ENCODE measurements at regions of chr1 and their contacts with region 1.

Region 1: GRCh38 chr1:53220171-53220961 is at the start of gene CZIB:
- DNase-seq: peak; percentile 80 to 98 (median 92)
- ATAC-seq: peak; percentile 91 to 93
- H3K4me3 Mint-ChIP-seq: peak within 1 kb of the TSS; percentile 89 to 97 (median 92)
- H3K27ac Mint-ChIP-seq: peak within 1 kb of the TSS; percentile 94 to 99 (median 98)
- H3K4me1 Mint-ChIP-seq: peaks cover 10 to 30% (median 26%) of the 10 kb centered on the region in 4 donors
- H3K27me3 Mint-ChIP-seq: no peaks in the 10 kb centered on the region
- polyA plus RNA-seq, gene CZIB: 61.2 to 66.5 (median 62.6) TPM

Region 2: DNA sequence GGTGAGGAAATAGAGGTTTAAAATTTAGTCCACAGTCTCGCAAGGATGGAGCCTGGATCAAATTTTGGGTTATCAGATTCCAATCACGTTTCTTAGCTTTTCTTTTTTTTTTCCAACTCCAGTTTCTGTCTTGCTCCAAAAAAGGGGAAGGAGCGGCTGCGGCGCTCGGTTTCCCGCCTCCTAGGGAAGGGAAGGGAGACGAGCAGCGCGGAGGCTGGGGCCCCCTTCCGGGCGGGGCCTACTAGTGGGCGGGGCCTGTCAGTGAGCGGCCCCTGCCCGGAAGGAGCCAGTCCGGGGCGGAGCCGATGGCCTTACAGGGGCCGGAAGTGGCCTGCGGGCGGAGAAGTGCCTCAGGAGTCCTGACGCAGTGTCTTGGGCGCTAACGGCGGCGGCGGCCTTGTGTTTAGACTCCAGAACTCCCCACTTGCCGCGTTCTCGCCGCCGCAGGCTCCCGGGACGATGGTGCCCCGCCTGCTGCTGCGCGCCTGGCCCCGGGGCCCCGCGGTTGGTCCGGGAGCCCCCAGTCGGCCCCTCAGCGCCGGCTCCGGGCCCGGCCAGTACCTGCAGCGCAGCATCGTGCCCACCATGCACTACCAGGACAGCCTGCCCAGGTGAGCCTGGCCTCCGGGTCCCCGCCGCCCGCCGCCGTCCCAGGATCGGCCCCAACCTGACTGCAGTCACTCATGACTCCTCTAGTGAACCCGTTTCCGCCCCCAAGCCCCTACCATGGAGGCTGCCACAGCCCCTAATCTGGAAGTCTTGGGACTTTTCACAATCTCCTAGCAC is 23.7 kb before region 1 on chr1 and contains the start of gene CPT2:
- POLR2A ChIA-PET with region 1: interaction called, 12 read pairs
- DNase-seq: peak; percentile 80 to 95 (median 88)
- ATAC-seq: peak; percentile 95
- H3K4me3 Mint-ChIP-seq: peak within 1 kb of the TSS; percentile 88 to 97 (median 96)
- H3K27ac Mint-ChIP-seq: peak within 1 kb of the TSS; percentile 94 to 100 (median 99)
- H3K4me1 Mint-ChIP-seq: peaks cover 17 to 40% (median 38%) of the 10 kb centered on the region in 4 donors
- H3K27me3 Mint-ChIP-seq: no peaks in the 10 kb centered on the region
- polyA plus RNA-seq, gene CPT2: 15.2 to 23.8 (median 19.1) TPM

Region 3: GRCh38 chr1:53238197-53239155 is 18.1 kb after region 1 on chr1 and contains the start of gene MAGOH:
- POLR2A ChIA-PET with region 1: interaction called, 28 read pairs
- DNase-seq: peak; percentile 87 to 97 (median 94)
- ATAC-seq: peak; percentile 97 to 98
- H3K4me3 Mint-ChIP-seq: peak within 1 kb of the TSS; percentile 94 to 100 (median 97)
- H3K27ac Mint-ChIP-seq: peak within 1 kb of the TSS; percentile 92 to 99 (median 98)
- H3K4me1 Mint-ChIP-seq: peaks cover 22 to 37% (median 34%) of the 10 kb centered on the region in 4 donors
- H3K27me3 Mint-ChIP-seq: no peaks in the 10 kb centered on the region
- polyA plus RNA-seq, gene MAGOH: 99.7 to 116 (median 114) TPM

Region 4: DNA sequence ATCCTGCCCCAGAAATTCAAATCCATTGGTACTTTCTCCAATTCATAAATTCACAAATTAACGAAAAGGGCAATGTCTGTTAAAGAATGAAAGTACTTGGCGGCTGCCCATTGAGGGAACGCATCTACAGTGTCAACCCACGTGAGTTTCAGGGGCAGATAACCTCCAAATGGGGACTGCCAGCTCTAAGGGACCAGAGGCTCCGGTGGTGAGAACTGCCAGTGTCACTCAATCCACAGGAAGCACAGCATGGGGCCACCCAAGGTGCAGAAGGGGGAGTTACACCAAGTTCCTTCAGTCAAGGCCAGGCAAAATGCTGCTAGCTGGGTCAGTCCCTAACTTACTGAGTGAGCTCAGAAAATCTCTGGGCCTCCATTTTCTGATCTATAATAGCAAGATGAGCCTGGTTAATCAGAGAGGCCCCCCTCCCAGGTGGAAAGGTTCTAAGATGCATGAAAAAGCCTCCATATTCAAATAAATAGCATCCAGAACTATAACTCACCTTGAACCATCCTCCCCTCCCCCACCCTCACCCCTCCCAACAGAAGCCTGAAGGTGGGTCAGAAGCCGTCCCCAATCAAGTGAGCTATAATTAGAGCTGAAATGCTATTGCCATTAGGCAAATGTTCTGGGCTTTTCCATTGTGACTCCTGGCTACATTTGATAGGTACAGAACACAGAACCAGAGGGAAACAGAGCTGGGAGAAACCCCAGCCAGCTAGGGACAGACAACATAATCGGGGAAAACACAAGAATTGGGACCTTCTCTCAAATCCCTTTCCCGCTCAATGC is 65.8 kb after region 1 on chr1:
- POLR2A ChIA-PET with region 1: no interaction called
- DNase-seq: no peak
- ATAC-seq: no peak
- H3K4me3 Mint-ChIP-seq: no peak overlapping the region
- H3K27ac Mint-ChIP-seq: peak overlapping the region in 1 of 10 donors; percentile 39
- H3K4me1 Mint-ChIP-seq: peaks cover 0 to 3% (median 0%) of the 10 kb centered on the region in 4 donors
- H3K27me3 Mint-ChIP-seq: no peaks in the 10 kb centered on the region

Measured in naive thymus-derived CD8-positive, alpha-beta T cell (primary cell).